Ovary (tissue), 10 donors: ENCODE measurements at regions of chr17 and their contacts with region 1.

Region 1: GRCh38 chr17:68512247-68512982 is at the start of gene PRKAR1A:
- DNase-seq: peak; percentile 96 to 97 (median 97)
- H3K4me3 ChIP-seq: peak within 1 kb of the TSS; percentile 87
- H3K27ac ChIP-seq: peak within 1 kb of the TSS; percentile 92 to 99
- H3K4me1 ChIP-seq: peaks cover 5% of the 10 kb centered on the region
- H3K27me3 ChIP-seq: no peaks in the 10 kb centered on the region
- CTCF ChIP-seq: peak in 2 of 3 donors; percentile 32 to 34
- EP300 ChIP-seq: peak; percentile 18
- POLR2A ChIP-seq: peak; percentile 97
- total RNA-seq, gene PRKAR1A: 221 to 453 (median 375) TPM

Region 2: DNA sequence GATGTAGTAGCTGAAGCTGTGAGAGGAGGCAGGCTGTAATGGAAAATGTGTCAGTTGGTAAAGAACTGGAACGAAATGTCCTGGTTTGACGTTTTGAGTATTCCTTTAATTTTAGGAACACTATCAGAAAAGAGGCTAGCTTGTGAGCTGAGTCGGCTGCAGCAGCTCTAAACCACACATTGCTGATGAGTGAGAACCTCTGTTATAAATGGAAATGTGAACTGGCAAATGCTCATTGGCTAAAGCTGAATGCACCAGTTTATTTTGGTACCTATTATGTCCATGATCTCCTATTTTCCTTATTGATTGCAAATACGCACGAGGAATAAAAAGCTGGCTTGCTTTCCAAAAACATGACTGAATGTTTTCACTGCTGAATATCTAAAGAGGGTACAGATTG is 44.1 kb before region 1 on chr17:
- intact Hi-C with region 1: loop called in 1 of 4 experiments (anchors 5 kb)
- DNase-seq: no peak
- H3K4me3 ChIP-seq: no peak overlapping the region
- H3K27ac ChIP-seq: no peak overlapping the region
- H3K4me1 ChIP-seq: peaks cover 4% of the 10 kb centered on the region
- H3K27me3 ChIP-seq: no peaks in the 10 kb centered on the region
- CTCF ChIP-seq: no peak
- EP300 ChIP-seq: no peak
- POLR2A ChIP-seq: no peak

Region 3: GRCh38 chr17:68670967-68671693 is 158.7 kb after region 1 on chr17:
- intact Hi-C with region 1: no loop called
- DNase-seq: no peak
- H3K4me3 ChIP-seq: no peak overlapping the region
- H3K27ac ChIP-seq: no peak overlapping the region
- H3K4me1 ChIP-seq: peaks cover 2% of the 10 kb centered on the region
- H3K27me3 ChIP-seq: no peaks in the 10 kb centered on the region
- CTCF ChIP-seq: no peak
- EP300 ChIP-seq: no peak
- POLR2A ChIP-seq: no peak